ENCODE measurements at regions of chr5 and their contacts with region 1.

Region 1: GRCh38 chr5:36875790-36876388 is 680 bp upstream of the NIPBL start:
- DNase-seq: peak; percentile 74
- H3K4me3 Mint-ChIP-seq: peak overlapping the region; percentile 93
- H3K27ac Mint-ChIP-seq: peak overlapping the region; percentile 97
- H3K4me1 Mint-ChIP-seq: peaks cover 21% of the 10 kb centered on the region
- H3K27me3 Mint-ChIP-seq: no peaks in the 10 kb centered on the region
- CTCF ChIP-seq: peak; percentile 31

Region 2: DNA sequence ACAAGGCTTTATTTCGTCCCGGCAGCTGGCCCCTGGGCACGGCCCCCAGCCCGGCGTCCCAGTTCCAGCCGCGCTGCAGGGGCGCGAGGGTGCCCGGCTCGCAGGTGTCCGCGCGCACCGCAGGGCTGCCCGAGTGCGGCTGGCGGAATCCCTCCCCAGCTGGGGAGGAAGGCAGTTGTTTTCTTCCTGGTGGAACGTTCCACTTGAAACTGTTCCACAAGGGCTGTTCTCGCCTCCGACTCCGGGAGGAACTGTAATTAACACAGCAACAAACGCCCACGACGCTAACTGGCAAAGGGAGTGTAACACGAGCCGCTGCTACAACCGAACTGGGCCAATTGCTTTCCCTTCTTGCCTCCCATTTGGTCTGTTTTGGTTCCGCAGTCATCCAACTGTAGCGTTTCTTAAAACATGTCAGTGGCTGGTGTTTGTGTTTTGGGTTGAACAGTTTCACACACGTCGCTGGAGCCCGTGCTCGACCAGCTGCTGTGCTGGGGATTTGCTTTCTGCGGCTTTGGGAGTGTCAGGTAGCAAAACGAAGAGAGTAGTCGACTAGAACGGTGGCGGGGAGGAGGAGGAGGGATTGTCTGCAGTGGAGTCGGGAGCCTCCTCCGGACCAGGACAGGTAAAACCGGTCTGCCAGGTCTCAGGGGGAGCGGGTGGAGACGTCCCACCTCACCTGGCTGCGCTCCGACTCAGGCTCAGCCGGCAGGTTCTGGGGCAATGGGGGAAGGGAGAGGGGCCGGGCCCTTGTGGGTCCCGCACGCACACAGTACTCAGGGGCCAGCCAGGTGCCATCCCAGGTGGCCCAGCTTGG is 130.9 kb before region 1 on chr5:
- CTCF ChIA-PET with region 1: interaction called, 48 read pairs
- POLR2A ChIA-PET with region 1: interaction called, 50 read pairs
- intact Hi-C with region 1: no loop called
- DNase-seq: peak; percentile 72
- H3K4me3 Mint-ChIP-seq: peak overlapping the region; percentile 85
- H3K27ac Mint-ChIP-seq: peak overlapping the region; percentile 32
- H3K4me1 Mint-ChIP-seq: peaks cover 17% of the 10 kb centered on the region
- H3K27me3 Mint-ChIP-seq: peaks cover 28% of the 10 kb centered on the region
- CTCF ChIP-seq: no peak

Region 3: DNA sequence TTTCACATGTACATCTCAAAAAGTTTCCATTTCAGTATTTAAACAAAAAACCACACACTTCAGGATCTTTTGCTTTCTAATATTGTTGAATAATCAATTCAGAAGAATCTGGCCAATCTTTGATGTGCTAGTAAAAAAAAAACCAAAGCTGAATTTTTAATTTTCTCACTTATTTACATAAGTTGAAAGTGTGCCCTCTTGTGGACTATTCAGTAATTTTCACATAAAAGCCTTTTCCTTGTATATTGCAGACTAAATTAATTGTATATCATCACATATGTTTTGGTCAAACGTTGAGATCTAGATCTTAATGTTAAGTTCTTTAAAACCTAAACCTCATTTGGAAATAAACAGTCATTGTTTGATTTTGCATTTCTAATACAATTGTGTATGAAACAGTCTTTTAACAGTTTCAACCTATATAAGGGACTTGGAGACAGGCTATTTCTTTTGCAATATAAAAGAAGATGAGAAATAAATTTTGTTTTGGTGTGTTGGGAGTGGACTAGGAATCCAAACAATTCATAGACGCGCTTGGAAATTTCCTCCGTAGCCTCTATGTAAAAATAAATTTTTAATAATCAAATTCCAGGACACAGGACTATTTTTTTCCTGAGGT is 68.8 kb after region 1 on chr5:
- CTCF ChIA-PET with region 1: interaction called, 5 read pairs
- POLR2A ChIA-PET with region 1: interaction called, 62 read pairs
- intact Hi-C with region 1: loop called (anchors 1 kb)
- DNase-seq: peak; percentile 60
- H3K4me3 Mint-ChIP-seq: no peak overlapping the region
- H3K27ac Mint-ChIP-seq: no peak overlapping the region
- H3K4me1 Mint-ChIP-seq: peaks cover 19% of the 10 kb centered on the region
- H3K27me3 Mint-ChIP-seq: no peaks in the 10 kb centered on the region
- CTCF ChIP-seq: peak; percentile 37

Region 4: DNA sequence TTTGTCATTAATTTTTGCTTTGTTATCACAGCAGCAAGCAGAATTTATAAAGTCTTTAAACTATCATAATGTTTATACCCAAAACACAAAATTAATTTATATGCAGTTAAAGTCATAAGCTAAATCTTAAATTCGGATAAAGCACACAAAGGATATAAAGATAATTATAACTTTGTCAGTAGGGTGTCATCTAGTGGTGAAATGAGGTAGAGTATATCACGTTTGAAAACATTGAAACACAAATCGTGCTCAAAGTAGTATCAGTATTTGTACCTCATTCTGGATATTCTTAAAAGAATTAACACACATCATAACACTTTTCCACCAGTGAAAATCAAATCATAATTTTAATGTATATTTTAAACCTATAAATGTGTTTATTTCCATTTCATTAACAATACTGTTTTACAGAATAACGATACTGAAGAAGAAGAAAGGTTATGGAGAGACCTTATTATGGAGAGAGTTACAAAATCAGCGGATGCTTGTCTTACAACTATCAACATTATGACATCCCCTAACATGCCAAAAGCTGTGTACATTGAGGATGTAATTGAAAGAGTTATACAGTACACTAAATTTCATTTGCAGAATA is 130.2 kb after region 1 on chr5:
- CTCF ChIA-PET with region 1: interaction called, 3 read pairs
- POLR2A ChIA-PET with region 1: interaction called, 12 read pairs
- intact Hi-C with region 1: loop called (anchors 5 kb)
- DNase-seq: peak; percentile 23
- H3K4me3 Mint-ChIP-seq: no peak overlapping the region
- H3K27ac Mint-ChIP-seq: no peak overlapping the region
- H3K4me1 Mint-ChIP-seq: no peaks in the 10 kb centered on the region
- H3K27me3 Mint-ChIP-seq: no peaks in the 10 kb centered on the region
- CTCF ChIP-seq: peak; percentile 51

Measured in MCF 10A (cell line).